ENCODE measurements at regions of chr4 and their contacts with region 1.

Region 1: GRCh38 chr4:183840311-183840710 is 64.8 kb upstream of the STOX2 start:
- DNase-seq: peak; percentile 88
- H3K4me3 Mint-ChIP-seq: no peak overlapping the region
- H3K27ac Mint-ChIP-seq: no peak overlapping the region
- H3K4me1 Mint-ChIP-seq: no peaks in the 10 kb centered on the region
- H3K27me3 Mint-ChIP-seq: peaks cover 6% of the 10 kb centered on the region

Region 2: GRCh38 chr4:184100297-184100885 is 260.1 kb after region 1 on chr4:
- intact Hi-C with region 1: loop called (anchors 1 kb)
- DNase-seq: peak; percentile 79
- H3K4me3 Mint-ChIP-seq: no peak overlapping the region
- H3K27ac Mint-ChIP-seq: no peak overlapping the region
- H3K4me1 Mint-ChIP-seq: peaks cover 2% of the 10 kb centered on the region
- H3K27me3 Mint-ChIP-seq: peaks cover 12% of the 10 kb centered on the region

Region 3: DNA sequence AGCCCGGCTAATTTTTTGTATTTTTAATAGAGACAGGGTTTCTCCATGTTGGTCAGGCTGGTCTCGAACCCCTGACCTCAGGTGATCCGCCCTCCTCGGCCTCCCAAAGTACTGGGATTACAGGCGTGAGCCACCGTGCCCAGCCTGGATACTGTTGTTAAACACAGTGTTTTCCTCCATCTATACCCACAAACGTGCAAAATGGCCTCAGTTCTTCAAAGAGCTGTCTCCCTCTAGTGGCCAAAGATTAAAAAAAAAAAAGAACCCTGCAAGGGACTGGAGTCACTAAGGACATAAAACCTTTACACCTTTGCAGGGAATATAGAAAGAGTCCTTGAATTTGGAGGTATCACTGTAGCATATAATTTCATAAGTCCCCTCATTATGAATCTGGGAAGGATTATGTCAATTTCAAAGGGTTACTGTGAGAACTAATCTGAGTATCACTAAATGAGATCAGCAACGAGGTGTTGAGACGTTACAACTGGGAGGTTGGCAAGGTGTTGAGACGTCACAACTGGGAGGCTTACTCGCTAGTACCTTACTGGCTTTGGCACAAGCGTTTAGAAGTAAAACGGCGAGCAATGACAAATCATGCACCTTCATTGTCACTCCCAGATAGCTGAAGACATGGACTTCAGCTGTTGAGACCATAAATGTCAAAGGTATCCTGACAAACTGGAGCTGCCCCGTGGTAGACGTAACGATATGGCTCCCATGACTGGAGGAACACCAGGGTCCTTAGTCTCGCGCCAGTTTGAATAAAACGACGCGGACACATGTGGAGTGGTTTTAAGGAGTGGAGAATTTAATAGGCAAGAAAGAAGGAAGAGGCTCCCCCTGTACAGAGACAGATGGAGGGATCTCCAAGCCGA is 410.7 kb after region 1 on chr4:
- intact Hi-C with region 1: loop called (anchors 1 kb)
- DNase-seq: peak; percentile 83
- H3K4me3 Mint-ChIP-seq: no peak overlapping the region
- H3K27ac Mint-ChIP-seq: peak overlapping the region; percentile 89
- H3K4me1 Mint-ChIP-seq: peaks cover 15% of the 10 kb centered on the region
- H3K27me3 Mint-ChIP-seq: no peaks in the 10 kb centered on the region